Naive thymus-derived CD4-positive, alpha-beta T cell (primary cell): ENCODE measurements at regions of chr14 and their contacts with region 1.

Region 1: DNA sequence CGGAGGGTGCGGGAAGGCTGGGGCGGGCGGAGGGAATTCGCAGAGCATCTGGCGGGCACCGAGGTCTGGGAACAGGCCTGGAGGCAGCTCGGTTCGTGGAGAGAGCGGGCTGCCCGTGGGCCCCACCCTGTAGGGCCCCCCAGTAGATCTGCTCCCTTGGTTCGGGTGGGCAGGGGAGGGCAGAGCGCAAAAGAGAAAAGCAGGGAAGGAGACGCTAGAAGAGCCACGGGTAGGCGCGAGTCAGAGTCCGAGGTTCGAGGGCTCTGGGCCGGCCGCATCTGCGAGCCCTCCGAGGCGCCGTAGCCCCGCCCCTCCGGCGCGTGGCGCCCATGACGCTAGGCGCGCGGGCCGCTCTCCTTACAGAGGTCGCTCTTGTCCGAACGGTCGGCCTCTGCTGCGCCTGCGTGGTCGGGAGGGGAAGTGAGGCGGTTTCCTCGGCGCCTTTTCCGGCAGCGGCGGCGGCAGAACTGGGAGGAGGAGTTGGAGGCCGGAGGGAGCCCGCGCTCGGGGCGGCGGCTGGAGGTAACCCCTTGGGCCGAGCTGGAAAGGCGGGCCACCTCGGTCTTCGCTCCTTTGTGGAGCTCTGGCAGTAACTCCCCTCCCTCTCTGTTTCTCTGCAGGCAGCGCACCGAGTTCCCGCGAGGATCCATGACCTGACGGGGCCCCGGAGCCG is at the start of gene ARF6:
- DNase-seq: peak; percentile 85 to 98 (median 89)
- ATAC-seq: peak; percentile 93
- H3K4me3 ChIP-seq: peak within 1 kb of the TSS; percentile 68
- H3K4me3 Mint-ChIP-seq: peak within 1 kb of the TSS; percentile 95 to 100 (median 98)
- H3K27ac ChIP-seq: peak within 1 kb of the TSS; percentile 97
- H3K27ac Mint-ChIP-seq: peak within 1 kb of the TSS; percentile 98 to 100 (median 99)
- H3K4me1 ChIP-seq: peaks cover 10 to 18% of the 10 kb centered on the region in 2 donors
- H3K4me1 Mint-ChIP-seq: peaks cover 21 to 42% (median 40%) of the 10 kb centered on the region in 7 donors
- H3K27me3 ChIP-seq: no peaks in the 10 kb centered on the region
- H3K27me3 Mint-ChIP-seq: no peaks in the 10 kb centered on the region
- total RNA-seq, gene ARF6: 61.9 to 173 (median 77.6) TPM

Region 2: GRCh38 chr14:49867831-49868723 is 24.7 kb before region 1 on chr14:
- CTCF ChIA-PET with region 1: interaction called, 16 read pairs
- POLR2A ChIA-PET with region 1: interaction called, 61 read pairs
- intact Hi-C with region 1: loop called (anchors 1 kb)
- DNase-seq: peak; percentile 87 to 97 (median 93)
- ATAC-seq: peak; percentile 96
- H3K4me3 ChIP-seq: peak overlapping the region; percentile 75
- H3K4me3 Mint-ChIP-seq: peak overlapping the region; percentile 79 to 95 (median 90)
- H3K27ac ChIP-seq: peak overlapping the region; percentile 91
- H3K27ac Mint-ChIP-seq: peak overlapping the region; percentile 93 to 99 (median 97)
- H3K4me1 ChIP-seq: peaks cover 31 to 35% of the 10 kb centered on the region in 2 donors
- H3K4me1 Mint-ChIP-seq: peaks cover 9 to 31% (median 17%) of the 10 kb centered on the region in 7 donors
- H3K27me3 ChIP-seq: no peaks in the 10 kb centered on the region
- H3K27me3 Mint-ChIP-seq: no peaks in the 10 kb centered on the region

Region 3: DNA sequence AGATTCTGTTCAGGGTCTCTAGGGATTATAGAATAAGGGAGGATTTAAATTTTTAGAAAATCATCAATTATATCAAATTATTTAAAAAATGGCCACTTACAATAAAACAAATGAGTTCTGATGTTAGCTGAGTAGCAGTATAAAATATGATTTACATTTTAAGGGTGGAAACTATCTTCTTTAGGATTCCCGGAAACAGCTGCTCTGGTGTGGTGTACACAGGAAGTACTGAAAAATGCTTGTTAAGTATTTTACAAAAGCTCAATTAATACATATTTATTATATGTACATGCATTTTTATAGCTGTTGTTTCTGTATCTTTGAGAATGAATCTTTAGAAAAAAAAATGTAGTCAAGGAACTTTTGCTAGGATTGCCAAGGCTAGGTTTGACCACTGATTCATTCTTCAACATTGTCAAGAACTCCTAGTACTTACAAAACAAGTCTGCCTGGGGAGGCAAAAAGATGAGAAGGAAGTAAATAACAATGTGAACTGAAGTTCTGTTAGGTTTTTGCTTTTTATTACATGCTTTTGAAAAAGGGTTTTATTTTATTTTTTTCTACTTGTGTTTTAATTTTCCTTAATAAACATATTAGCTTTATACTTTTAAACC is 48.1 kb after region 1 on chr14:
- CTCF ChIA-PET with region 1: no interaction called
- POLR2A ChIA-PET with region 1: interaction called, 18 read pairs
- intact Hi-C with region 1: loop called (anchors 2 kb)
- DNase-seq: peak in 6 of 9 donors; percentile 25 to 63 (median 46)
- ATAC-seq: peak; percentile 64
- H3K4me3 ChIP-seq: peak overlapping the region; percentile 24
- H3K4me3 Mint-ChIP-seq: peak overlapping the region in 9 of 10 donors; percentile 18 to 72 (median 66)
- H3K27ac ChIP-seq: peak overlapping the region; percentile 39
- H3K27ac Mint-ChIP-seq: peak overlapping the region; percentile 27 to 90 (median 85)
- H3K4me1 ChIP-seq: peaks cover 31 to 36% of the 10 kb centered on the region in 2 donors
- H3K4me1 Mint-ChIP-seq: peaks cover 20 to 71% (median 59%) of the 10 kb centered on the region in 7 donors
- H3K27me3 ChIP-seq: no peaks in the 10 kb centered on the region
- H3K27me3 Mint-ChIP-seq: no peaks in the 10 kb centered on the region

Region 4: GRCh38 chr14:50038398-50039119 is 145.8 kb after region 1 on chr14:
- CTCF ChIA-PET with region 1: no interaction called
- POLR2A ChIA-PET with region 1: interaction called, 7 read pairs
- intact Hi-C with region 1: loop called in 1 of 2 experiments (anchors 1 kb)
- DNase-seq: peak in 1 of 9 donors; percentile 69
- ATAC-seq: peak; percentile 79
- H3K4me3 ChIP-seq: no peak overlapping the region
- H3K4me3 Mint-ChIP-seq: peak overlapping the region in 3 of 10 donors; percentile 40 to 59 (median 53)
- H3K27ac ChIP-seq: no peak overlapping the region
- H3K27ac Mint-ChIP-seq: peak overlapping the region in 8 of 9 donors; percentile 36 to 95 (median 83)
- H3K4me1 ChIP-seq: peaks cover 46 to 52% of the 10 kb centered on the region in 2 donors
- H3K4me1 Mint-ChIP-seq: peaks cover 33 to 68% (median 54%) of the 10 kb centered on the region in 7 donors
- H3K27me3 ChIP-seq: no peaks in the 10 kb centered on the region
- H3K27me3 Mint-ChIP-seq: no peaks in the 10 kb centered on the region

Region 5: GRCh38 chr14:50085570-50086320 is 193.0 kb after region 1 on chr14:
- CTCF ChIA-PET with region 1: no interaction called
- POLR2A ChIA-PET with region 1: interaction called, 8 read pairs
- intact Hi-C with region 1: loop called (anchors 1 kb)
- DNase-seq: peak in 1 of 9 donors; percentile 45
- ATAC-seq: no peak
- H3K4me3 ChIP-seq: no peak overlapping the region
- H3K4me3 Mint-ChIP-seq: peak overlapping the region; percentile 56 to 80 (median 70)
- H3K27ac ChIP-seq: peak overlapping the region; percentile 97
- H3K27ac Mint-ChIP-seq: peak overlapping the region; percentile 86 to 97 (median 90)
- H3K4me1 ChIP-seq: peaks cover 86 to 94% of the 10 kb centered on the region in 2 donors
- H3K4me1 Mint-ChIP-seq: peaks cover 65 to 97% (median 91%) of the 10 kb centered on the region in 7 donors
- H3K27me3 ChIP-seq: no peaks in the 10 kb centered on the region
- H3K27me3 Mint-ChIP-seq: no peaks in the 10 kb centered on the region

Region 6: GRCh38 chr14:50116181-50116956 is 223.6 kb after region 1 on chr14 and contains the start of gene VCPKMT:
- CTCF ChIA-PET with region 1: no interaction called
- POLR2A ChIA-PET with region 1: interaction called, 9 read pairs
- intact Hi-C with region 1: loop called in 1 of 2 experiments (anchors 1 kb)
- DNase-seq: peak; percentile 93 to 97 (median 97)
- ATAC-seq: peak; percentile 99
- H3K4me3 ChIP-seq: peak within 1 kb of the TSS; percentile 74
- H3K4me3 Mint-ChIP-seq: peak within 1 kb of the TSS; percentile 92 to 98 (median 96)
- H3K27ac ChIP-seq: peak within 1 kb of the TSS; percentile 94
- H3K27ac Mint-ChIP-seq: peak within 1 kb of the TSS; percentile 97 to 99 (median 98)
- H3K4me1 ChIP-seq: peaks cover 18 to 20% of the 10 kb centered on the region in 2 donors
- H3K4me1 Mint-ChIP-seq: peaks cover 11 to 37% (median 23%) of the 10 kb centered on the region in 7 donors
- H3K27me3 ChIP-seq: no peaks in the 10 kb centered on the region
- H3K27me3 Mint-ChIP-seq: no peaks in the 10 kb centered on the region
- total RNA-seq, gene VCPKMT: 10.3 to 25.9 (median 17.4) TPM

Region 7: DNA sequence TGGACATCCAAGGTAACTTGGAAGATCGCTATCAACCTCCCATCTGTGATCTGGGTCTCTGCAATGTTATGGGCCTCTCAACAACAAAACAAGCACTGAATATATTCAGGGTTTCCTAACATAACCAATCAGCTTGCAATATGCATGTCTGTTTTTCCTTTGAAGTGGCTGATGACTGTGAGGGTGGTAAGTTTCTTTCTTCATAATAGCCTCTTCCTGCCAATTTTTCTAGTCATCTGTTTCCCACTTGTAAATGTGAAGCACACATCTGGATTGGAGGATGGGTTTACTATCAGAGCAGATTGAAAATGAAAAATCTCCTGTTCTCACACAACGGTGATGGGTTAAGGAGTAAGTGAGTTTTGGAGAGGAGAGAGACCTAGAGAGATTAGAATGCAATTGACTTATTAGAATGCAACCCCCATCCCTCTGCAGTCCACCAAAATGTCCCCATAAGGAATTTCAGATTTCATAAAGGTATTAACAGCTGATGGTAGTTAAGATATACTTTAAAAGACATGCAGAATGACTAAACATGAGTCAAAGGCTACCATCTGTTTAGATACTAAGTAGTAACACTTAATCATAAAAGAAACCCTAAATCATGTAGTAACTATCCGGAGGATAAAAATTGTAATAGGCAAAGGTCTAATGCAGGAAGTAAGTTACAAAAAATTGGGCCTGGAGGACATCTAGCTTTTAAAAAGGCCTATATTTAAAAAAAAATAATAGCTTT is 833.8 kb after region 1 on chr14:
- CTCF ChIA-PET with region 1: no interaction called
- POLR2A ChIA-PET with region 1: no interaction called
- intact Hi-C with region 1: no loop called
- DNase-seq: peak in 5 of 9 donors; percentile 16 to 50 (median 37)
- ATAC-seq: peak; percentile 66
- H3K4me3 ChIP-seq: no peak overlapping the region
- H3K4me3 Mint-ChIP-seq: peak overlapping the region in 7 of 10 donors; percentile 0 to 87 (median 26)
- H3K27ac ChIP-seq: peak overlapping the region; percentile 32
- H3K27ac Mint-ChIP-seq: peak overlapping the region; percentile 57 to 97 (median 79)
- H3K4me1 ChIP-seq: peaks cover 10 to 19% of the 10 kb centered on the region in 2 donors
- H3K4me1 Mint-ChIP-seq: peaks cover 11 to 39% (median 29%) of the 10 kb centered on the region in 7 donors
- H3K27me3 ChIP-seq: no peaks in the 10 kb centered on the region
- H3K27me3 Mint-ChIP-seq: no peaks in the 10 kb centered on the region